Activated T-helper 2 cell treated with anti-CD3 and anti-CD28 coated beads, Interferon-gamma antibody, Interleukin-2, Interleukin-4, amounts not matched to agents 10 μg/mL and 5 μg/mL and 100 μg/mL, durations not matched to agents 14 hours and 24 hours and 36 hours (primary cell): ENCODE measurements at regions of chr4 and their contacts with region 1.

Region 1: DNA sequence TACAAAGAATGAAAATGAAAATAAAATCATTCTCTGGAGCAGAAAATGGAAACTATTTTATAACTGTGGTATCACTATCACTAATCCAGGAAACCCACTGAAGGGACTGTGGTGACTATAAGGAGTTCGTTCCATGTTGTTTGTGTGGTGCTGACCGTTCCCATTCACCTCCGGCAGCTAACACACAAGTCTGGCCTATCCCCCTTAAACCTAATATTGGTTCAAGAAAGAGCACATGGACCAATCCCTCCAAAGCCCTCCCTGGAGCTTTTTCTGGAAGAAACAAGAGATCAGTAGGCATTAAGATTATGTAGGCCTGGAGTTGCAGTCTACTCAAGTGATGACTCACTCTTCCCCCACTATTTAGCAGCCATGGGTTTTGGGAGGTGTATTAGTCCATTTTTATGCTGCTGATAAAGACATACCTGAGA is 25.9 kb upstream of the FAM241A start:
- DNase-seq: peak; percentile 36
- H3K4me3 Mint-ChIP-seq: no peak overlapping the region
- H3K27ac Mint-ChIP-seq: peak overlapping the region; percentile 91
- H3K4me1 Mint-ChIP-seq: peaks cover 22% of the 10 kb centered on the region
- H3K27me3 Mint-ChIP-seq: peaks cover 14% of the 10 kb centered on the region

Region 2: DNA sequence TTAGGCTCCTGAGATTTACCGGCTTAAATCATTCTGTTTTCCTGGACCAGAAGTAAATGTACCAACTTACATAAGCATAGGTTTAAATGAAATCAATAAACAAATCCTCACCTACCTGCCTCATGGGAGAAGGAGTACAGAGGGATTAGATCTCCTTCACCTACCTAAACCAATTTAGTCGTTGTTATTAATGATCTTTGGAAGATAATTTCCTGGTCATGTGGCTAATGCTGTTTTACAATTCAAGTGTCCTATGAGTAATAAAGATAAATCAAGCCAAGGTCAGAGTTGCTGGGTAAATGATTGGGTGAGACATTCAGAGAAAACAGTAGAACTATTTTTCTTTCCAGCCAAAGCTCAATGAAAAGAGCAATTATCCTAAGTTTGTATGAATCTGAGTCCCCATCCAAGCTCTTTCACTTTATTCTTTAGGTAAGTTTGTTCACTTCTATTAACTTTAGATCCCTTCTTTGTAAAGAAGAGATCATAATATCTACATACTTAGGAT is 397.1 kb before region 1 on chr4:
- intact Hi-C with region 1: no loop called
- DNase-seq: no peak
- H3K4me3 Mint-ChIP-seq: no peak overlapping the region
- H3K27ac Mint-ChIP-seq: no peak overlapping the region
- H3K4me1 Mint-ChIP-seq: no peaks in the 10 kb centered on the region
- H3K27me3 Mint-ChIP-seq: no peaks in the 10 kb centered on the region

Region 3: GRCh38 chr4:112145820-112146813 is 26.7 kb after region 1 on chr4:
- intact Hi-C with region 1: loop called (anchors 1 kb)
- DNase-seq: peak; percentile 44
- H3K4me3 Mint-ChIP-seq: peak overlapping the region; percentile 85
- H3K27ac Mint-ChIP-seq: peak overlapping the region; percentile 92
- H3K4me1 Mint-ChIP-seq: peaks cover 35% of the 10 kb centered on the region
- H3K27me3 Mint-ChIP-seq: no peaks in the 10 kb centered on the region

Region 4: DNA sequence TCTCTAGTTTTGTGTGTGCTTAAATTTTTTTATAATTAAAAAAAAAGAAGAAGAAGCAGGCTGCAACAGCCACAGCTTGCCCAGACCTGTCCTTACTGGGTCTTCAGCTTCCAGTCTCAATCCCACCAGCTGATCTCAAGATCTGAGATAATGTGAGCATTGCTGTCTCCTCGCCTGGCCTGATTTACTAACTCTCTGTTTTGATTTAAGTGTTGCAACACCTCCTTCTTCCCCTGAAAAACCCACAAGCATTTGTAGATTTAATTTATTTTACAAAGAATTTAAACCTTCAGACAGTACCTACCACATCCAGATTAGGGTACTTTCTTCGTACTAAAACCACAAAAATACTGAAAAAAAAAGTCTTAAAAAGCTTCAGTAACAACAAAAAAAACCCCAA is 63.9 kb after region 1 on chr4:
- intact Hi-C with region 1: loop called (anchors 2 kb)
- DNase-seq: no peak
- H3K4me3 Mint-ChIP-seq: no peak overlapping the region
- H3K27ac Mint-ChIP-seq: peak overlapping the region; percentile 35
- H3K4me1 Mint-ChIP-seq: peaks cover 34% of the 10 kb centered on the region
- H3K27me3 Mint-ChIP-seq: no peaks in the 10 kb centered on the region